ENCODE measurements at regions of chr1 and their contacts with region 1.

Region 1: DNA sequence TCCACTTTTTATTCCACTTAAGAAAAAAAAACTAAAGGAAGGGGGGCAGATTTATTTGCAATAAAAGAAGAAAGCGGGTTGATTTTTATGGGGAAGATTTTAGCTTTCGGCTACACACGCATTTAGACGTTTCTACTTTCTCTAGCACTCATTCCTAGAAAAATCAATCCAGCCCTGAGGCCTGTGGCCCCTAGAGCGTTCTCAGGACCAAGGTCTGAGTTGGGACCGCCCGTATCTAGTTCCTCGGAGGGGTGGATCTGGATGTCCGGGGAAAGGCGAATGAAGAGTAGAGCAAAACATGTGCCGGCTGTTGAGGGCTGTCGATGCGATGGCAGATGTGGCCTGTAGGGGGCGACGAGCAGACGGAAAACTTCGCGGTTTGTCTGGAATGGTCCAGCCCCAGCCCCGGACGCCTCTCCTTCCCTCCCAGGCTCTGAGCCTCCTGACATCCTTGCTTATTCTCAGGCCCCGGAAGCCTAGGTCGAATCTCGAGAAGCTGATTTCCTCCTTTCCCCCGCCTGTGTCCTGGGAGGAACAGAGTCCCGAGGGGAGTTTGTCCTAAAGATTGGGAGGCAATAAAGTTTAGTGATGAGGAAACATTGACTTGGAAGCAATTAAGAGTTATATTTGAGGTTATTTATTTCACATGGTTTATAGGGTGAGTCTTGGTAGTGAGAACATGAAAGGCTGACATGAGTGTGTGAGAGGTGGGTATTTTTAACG is 5.2 kb downstream of the FOXD3 start:
- DNase-seq: peak; percentile 63 to 72 (median 65)
- ATAC-seq: peak; percentile 89 to 96 (median 92)
- H3K4me3 ChIP-seq: no peak overlapping the region
- H3K27ac ChIP-seq: no peak overlapping the region
- H3K4me1 ChIP-seq: peaks cover 0 to 4% (median 0%) of the 10 kb centered on the region in 4 donors
- H3K27me3 ChIP-seq: peaks cover 22 to 73% of the 10 kb centered on the region in 2 donors
- CTCF ChIP-seq: peak; percentile 59 to 82 (median 80)
- POLR2A ChIP-seq: no peak

Region 2: GRCh38 chr1:63169057-63169456 is 158.5 kb before region 1 on chr1:
- intact Hi-C with region 1: no loop called
- DNase-seq: no peak
- ATAC-seq: no peak
- H3K4me3 ChIP-seq: no peak overlapping the region
- H3K27ac ChIP-seq: no peak overlapping the region
- H3K4me1 ChIP-seq: no peaks in the 10 kb centered on the region
- H3K27me3 ChIP-seq: no peaks in the 10 kb centered on the region
- CTCF ChIP-seq: no peak
- POLR2A ChIP-seq: no peak

Region 3: DNA sequence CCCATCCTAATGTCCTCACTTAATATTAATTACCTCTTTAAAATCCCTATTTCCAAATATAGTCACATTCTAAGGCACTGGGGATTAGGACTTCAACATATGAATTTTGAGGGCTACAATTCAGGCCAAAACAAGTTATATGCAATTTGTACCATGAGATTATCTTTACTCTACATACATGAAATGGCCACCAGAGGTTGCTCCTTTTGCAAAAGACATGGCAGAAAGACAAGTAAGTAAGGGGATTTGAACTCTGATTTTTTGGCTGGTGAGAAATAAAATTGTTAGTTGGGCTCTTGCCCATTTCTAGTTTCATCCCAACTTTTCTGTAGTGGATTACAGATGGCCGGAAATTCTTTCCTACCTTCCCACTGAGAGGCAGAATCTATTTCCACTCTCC is 35.0 kb after region 1 on chr1:
- intact Hi-C with region 1: no loop called
- DNase-seq: no peak
- ATAC-seq: no peak
- H3K4me3 ChIP-seq: no peak overlapping the region
- H3K27ac ChIP-seq: no peak overlapping the region
- H3K4me1 ChIP-seq: no peaks in the 10 kb centered on the region
- H3K27me3 ChIP-seq: no peaks in the 10 kb centered on the region
- CTCF ChIP-seq: no peak
- POLR2A ChIP-seq: no peak

Region 4: GRCh38 chr1:63435161-63435560 is 107.6 kb after region 1 on chr1:
- intact Hi-C with region 1: loop called in 1 of 2 experiments (anchors 10 kb)
- DNase-seq: no peak
- ATAC-seq: no peak
- H3K4me3 ChIP-seq: no peak overlapping the region
- H3K27ac ChIP-seq: no peak overlapping the region
- H3K4me1 ChIP-seq: no peaks in the 10 kb centered on the region
- H3K27me3 ChIP-seq: no peaks in the 10 kb centered on the region
- CTCF ChIP-seq: no peak
- POLR2A ChIP-seq: no peak